Psoas muscle (tissue), 8 donors: ENCODE measurements at regions of chr19 and their contacts with region 1.

Region 1: DNA sequence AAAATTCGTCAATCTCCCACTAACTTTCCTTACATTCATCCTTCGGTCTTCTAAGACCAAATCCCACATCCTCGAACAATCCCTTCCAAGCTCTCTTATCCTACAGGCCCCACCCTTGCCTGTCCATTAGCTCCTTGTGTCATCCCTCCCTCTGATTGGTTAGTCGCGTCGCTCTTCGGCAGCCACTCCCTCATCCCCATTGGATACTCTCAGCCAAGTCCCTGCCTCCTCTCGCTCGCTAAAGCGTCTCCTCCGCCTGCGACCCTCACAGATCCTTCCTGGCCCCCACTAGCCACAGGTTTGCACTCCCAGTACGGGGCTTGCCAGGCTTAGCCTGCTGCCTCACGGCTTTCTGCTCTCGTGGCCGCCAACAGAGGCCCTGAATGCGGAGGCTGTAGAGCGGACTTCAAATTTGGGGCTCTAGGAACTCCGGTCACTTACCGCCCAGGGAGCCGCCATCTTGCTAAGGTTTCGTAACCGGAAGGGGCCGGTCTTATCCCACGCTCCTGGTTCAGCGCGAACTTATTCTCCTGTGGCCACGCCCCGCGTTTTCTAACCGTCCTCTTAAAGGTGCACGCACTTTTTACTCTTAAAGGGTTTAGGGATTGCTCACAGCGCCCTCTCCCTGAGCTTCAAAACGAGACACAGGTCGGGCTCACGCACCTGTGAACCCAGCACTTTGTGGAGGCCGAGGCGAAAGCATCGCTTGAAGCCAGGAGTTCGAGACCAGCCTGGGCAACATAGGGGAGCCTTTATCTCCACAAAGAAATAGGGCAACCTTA is at the start of gene DMAC2:
- DNase-seq: peak; percentile 98
- ATAC-seq: peak; percentile 97 to 98 (median 98)
- H3K4me3 ChIP-seq: peak within 1 kb of the TSS; percentile 73
- H3K27ac ChIP-seq: peak within 1 kb of the TSS; percentile 91
- H3K4me1 ChIP-seq: peaks cover 9% of the 10 kb centered on the region
- H3K27me3 ChIP-seq: peaks cover 0 to 4% (median 0%) of the 10 kb centered on the region in 3 donors
- CTCF ChIP-seq: peak; percentile 43
- total RNA-seq, gene DMAC2: 37.6 to 71.4 (median 59.5) TPM

Region 2: GRCh38 chr19:41206926-41207750 is 232.5 kb before region 1 on chr19:
- intact Hi-C with region 1: loop called in 1 of 2 experiments (anchors 10 kb)
- DNase-seq: peak; percentile 83 to 94
- ATAC-seq: peak in 3 of 4 donors; percentile 53 to 79 (median 60)
- H3K4me3 ChIP-seq: peak overlapping the region; percentile 11
- H3K27ac ChIP-seq: peak overlapping the region; percentile 23
- H3K4me1 ChIP-seq: no peaks in the 10 kb centered on the region
- H3K27me3 ChIP-seq: peaks cover 0 to 4% (median 0%) of the 10 kb centered on the region in 3 donors
- CTCF ChIP-seq: no peak

Region 3: GRCh38 chr19:41397086-41398049 is 42.3 kb before region 1 on chr19 and contains the starts of genes BCKDHA and EXOSC5:
- intact Hi-C with region 1: loop called in 1 of 2 experiments (anchors 5 kb)
- DNase-seq: peak; percentile 100
- ATAC-seq: peak; percentile 97 to 99 (median 98)
- H3K4me3 ChIP-seq: peak within 1 kb of the TSS; percentile 89
- H3K27ac ChIP-seq: peak within 1 kb of the TSS; percentile 93
- H3K4me1 ChIP-seq: peaks cover 12% of the 10 kb centered on the region
- H3K27me3 ChIP-seq: no peaks in the 10 kb centered on the region
- CTCF ChIP-seq: no peak
- total RNA-seq, gene BCKDHA: 31.5 to 45.1 (median 39.8) TPM
- total RNA-seq, gene EXOSC5: 25.4 to 42.3 (median 41.2) TPM

Region 4: GRCh38 chr19:41495589-41495988 is 56.0 kb after region 1 on chr19:
- intact Hi-C with region 1: no loop called
- DNase-seq: no peak
- ATAC-seq: no peak
- H3K4me3 ChIP-seq: no peak overlapping the region
- H3K27ac ChIP-seq: no peak overlapping the region
- H3K4me1 ChIP-seq: no peaks in the 10 kb centered on the region
- H3K27me3 ChIP-seq: no peaks in the 10 kb centered on the region
- CTCF ChIP-seq: no peak